ENCODE measurements at regions of chr17 and their contacts with region 1.

Region 1: GRCh38 chr17:43483674-43484372 is at the start of gene DHX8:
- DNase-seq: peak; percentile 94
- H3K4me3 ChIP-seq: peak within 1 kb of the TSS; percentile 93
- H3K27ac ChIP-seq: peak within 1 kb of the TSS; percentile 72
- H3K4me1 ChIP-seq: no peaks in the 10 kb centered on the region
- H3K27me3 ChIP-seq: no peaks in the 10 kb centered on the region
- CTCF ChIP-seq: peak; percentile 99
- total RNA-seq, gene DHX8: 24.4 and 41.2 TPM in 2 replicates

Region 2: GRCh38 chr17:43327421-43327820 is 156.4 kb before region 1 on chr17:
- CTCF ChIA-PET with region 1: no interaction called
- POLR2A ChIA-PET with region 1: no interaction called
- intact Hi-C with region 1: loop called (anchors 5 kb)
- DNase-seq: no peak
- H3K4me3 ChIP-seq: no peak overlapping the region
- H3K27ac ChIP-seq: no peak overlapping the region
- H3K4me1 ChIP-seq: no peaks in the 10 kb centered on the region
- H3K27me3 ChIP-seq: no peaks in the 10 kb centered on the region
- CTCF ChIP-seq: no peak

Region 3: DNA sequence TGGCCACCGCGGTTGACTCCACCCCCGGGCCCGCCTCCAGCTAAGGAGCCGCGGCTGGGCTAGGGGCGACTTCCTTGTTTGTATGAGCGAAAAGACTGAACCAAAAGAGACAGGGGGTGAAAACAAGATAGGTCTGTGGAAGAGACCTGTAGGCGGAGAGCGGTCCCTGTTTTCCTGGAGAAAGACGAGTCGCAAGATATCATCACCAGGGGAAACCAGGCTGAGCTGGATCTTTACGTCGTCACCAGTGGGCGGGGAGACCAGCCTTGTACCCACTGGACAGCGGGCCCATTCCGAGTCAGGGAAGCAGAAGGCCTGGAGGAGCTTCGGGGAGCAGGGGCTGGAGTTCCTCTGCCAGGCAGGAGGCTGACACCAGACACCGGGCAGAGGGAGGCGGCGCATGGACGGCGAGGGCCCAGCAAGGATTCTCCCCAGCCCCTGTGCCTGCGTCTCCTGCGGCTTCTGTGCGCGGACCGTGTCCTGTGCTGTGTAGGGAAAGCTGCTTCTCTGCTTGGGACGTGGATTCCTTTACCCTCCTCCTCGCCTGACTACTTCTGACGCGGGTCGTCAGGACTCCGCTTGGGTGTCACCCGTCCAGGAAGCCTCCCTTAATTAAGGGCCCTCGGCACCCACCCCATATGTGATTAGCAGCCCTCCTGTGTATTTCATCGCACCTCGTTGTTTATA is 95.3 kb before region 1 on chr17:
- CTCF ChIA-PET with region 1: interaction called, 15 read pairs
- POLR2A ChIA-PET with region 1: interaction called, 3 read pairs
- intact Hi-C with region 1: loop called (anchors 1 kb)
- DNase-seq: peak; percentile 84
- H3K4me3 ChIP-seq: peak overlapping the region; percentile 47
- H3K27ac ChIP-seq: peak overlapping the region; percentile 80
- H3K4me1 ChIP-seq: no peaks in the 10 kb centered on the region
- H3K27me3 ChIP-seq: no peaks in the 10 kb centered on the region
- CTCF ChIP-seq: no peak

Region 4: DNA sequence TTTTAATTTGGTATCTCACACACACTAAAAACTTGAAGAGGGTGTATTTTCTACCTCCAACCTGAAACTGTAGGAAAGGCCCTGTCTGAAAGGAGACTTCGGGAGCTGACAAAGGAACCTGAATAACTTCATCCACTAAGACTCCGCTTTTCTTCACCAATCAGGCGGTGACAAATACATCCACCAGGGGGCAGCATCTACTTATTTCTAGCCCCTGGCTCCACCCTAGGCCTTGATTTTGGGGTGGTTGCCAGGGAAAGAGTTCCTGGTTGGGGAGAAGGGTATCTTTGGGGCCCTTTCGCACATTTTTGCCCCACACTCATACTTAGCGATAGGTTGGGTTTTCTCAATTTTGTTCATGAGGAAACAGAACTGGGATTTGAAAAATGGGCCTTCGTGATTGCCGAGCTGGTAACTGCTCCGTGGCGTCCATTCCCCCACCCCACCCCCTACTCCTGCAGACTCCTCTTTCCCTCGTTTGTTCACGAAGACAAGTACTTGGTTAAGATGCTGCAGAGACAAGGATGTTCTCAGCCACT is 89.8 kb before region 1 on chr17:
- CTCF ChIA-PET with region 1: interaction called, 15 read pairs
- POLR2A ChIA-PET with region 1: interaction called, 3 read pairs
- intact Hi-C with region 1: loop called (anchors 1 kb)
- DNase-seq: peak; percentile 84
- H3K4me3 ChIP-seq: no peak overlapping the region
- H3K27ac ChIP-seq: no peak overlapping the region
- H3K4me1 ChIP-seq: no peaks in the 10 kb centered on the region
- H3K27me3 ChIP-seq: no peaks in the 10 kb centered on the region
- CTCF ChIP-seq: peak; percentile 69

Region 5: GRCh38 chr17:43556292-43556691 is 72.5 kb after region 1 on chr17:
- CTCF ChIA-PET with region 1: no interaction called
- POLR2A ChIA-PET with region 1: no interaction called
- intact Hi-C with region 1: no loop called
- DNase-seq: no peak
- H3K4me3 ChIP-seq: no peak overlapping the region
- H3K27ac ChIP-seq: no peak overlapping the region
- H3K4me1 ChIP-seq: peaks cover 7% of the 10 kb centered on the region
- H3K27me3 ChIP-seq: no peaks in the 10 kb centered on the region
- CTCF ChIP-seq: no peak